GM10248 (cell line): ENCODE measurements at regions of chr19 and their contacts with region 1.

Region 1: DNA sequence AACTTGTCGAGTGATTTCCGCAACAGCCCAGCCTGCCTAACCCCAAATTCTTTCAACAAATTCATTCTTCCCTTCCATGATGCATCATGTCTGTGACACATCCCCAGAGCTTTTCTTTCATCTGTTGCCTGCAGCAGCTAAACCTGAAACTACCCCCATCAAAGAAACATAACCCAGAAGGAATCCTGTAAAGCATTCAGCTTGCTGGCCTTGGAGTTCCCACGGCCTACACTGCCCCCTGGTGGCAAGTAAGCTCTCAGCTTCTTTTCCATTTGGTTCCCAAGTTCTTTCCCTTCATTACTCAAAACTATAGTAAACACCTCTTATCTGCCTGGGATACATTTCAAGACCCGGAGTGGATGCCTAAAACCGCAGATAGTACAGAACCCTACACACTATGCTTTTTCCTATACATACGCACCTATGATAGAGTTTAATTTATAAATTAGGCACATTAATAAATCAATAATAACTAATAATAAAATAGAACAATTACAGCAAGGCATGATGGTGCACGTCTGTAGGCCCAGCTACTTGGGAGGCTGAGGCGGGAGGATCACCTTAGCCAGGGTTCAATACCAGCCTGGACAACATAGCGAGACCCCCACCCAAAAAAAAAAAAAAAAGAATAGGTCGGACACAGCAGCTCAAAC is 7.4 kb downstream of the ETHE1 start:
- DNase-seq: peak; percentile 72
- CTCF ChIP-seq: peak; percentile 80

Region 2: GRCh38 chr19:43305658-43306057 is 213.9 kb before region 1 on chr19:
- CTCF ChIA-PET with region 1: no interaction called
- POLR2A ChIA-PET with region 1: no interaction called
- DNase-seq: no peak
- CTCF ChIP-seq: no peak

Region 3: DNA sequence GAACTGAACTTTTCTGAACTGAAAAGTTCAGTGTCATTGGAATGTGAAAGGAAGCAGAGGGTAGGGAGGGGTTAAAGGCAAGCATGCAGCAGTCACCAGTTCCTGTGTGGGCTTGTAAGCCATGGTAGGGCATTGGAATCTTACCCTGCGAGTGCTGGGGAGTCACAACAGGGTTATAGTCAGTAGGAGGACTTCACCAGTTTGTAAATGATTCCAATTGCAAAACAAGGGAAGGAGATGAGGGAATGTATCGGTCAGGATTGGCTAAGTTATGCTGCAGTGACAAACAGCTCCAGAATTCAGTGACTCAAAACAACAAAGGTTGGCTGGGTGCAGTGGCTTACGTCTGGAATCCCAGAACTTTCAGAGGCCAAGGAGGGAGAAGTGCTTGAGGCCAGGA is 67.0 kb before region 1 on chr19:
- CTCF ChIA-PET with region 1: interaction called, 340 read pairs
- POLR2A ChIA-PET with region 1: no interaction called
- DNase-seq: no peak
- CTCF ChIP-seq: no peak

Region 4: GRCh38 chr19:43463381-43464136 is 56.0 kb before region 1 on chr19:
- CTCF ChIA-PET with region 1: interaction called, 12 read pairs
- POLR2A ChIA-PET with region 1: no interaction called
- DNase-seq: peak; percentile 99
- CTCF ChIP-seq: no peak

Region 5: GRCh38 chr19:43489310-43489709 is 30.3 kb before region 1 on chr19:
- CTCF ChIA-PET with region 1: interaction called, 10 read pairs
- POLR2A ChIA-PET with region 1: no interaction called
- DNase-seq: peak; percentile 68
- CTCF ChIP-seq: no peak

Region 6: GRCh38 chr19:43503501-43504425 is 15.8 kb before region 1 on chr19:
- CTCF ChIA-PET with region 1: interaction called, 22 read pairs
- POLR2A ChIA-PET with region 1: interaction called, 4 read pairs
- DNase-seq: peak; percentile 99
- CTCF ChIP-seq: peak; percentile 46

Region 7: DNA sequence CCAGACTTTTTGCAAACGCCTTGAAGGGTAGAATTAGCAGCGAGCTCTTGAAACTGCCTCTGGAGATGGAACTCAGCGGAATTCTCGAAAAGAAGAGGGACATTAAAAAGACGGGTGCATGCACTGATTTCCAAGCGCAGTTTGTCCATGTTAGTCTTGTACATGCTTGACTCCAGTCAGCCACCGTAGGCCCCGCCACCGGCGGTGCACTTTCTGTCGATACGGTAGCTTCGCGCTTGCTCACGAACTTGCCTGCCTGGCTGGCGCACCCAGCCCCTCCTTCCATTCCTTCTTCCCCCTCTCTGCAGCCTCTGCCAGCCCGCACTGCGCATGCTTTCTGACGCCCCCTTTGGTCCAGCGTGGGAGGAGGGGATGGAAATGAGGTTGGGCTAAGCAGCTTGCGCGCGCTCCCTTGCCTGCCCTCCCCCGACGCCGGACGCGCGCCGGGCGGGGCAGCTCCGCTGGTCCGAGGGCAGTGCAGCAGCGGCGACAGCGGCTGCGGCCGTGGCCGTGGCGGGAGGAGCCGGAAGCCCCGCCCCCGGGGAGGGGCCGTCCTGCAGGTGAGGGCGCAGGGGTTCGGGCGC is 13.5 kb after region 1 on chr19 and contains the start of gene ZNF575:
- CTCF ChIA-PET with region 1: interaction called, 22 read pairs
- POLR2A ChIA-PET with region 1: no interaction called
- DNase-seq: peak; percentile 92
- CTCF ChIP-seq: no peak

Region 8: GRCh38 chr19:43545981-43546380 is 26.4 kb after region 1 on chr19:
- CTCF ChIA-PET with region 1: no interaction called
- POLR2A ChIA-PET with region 1: no interaction called
- DNase-seq: no peak
- CTCF ChIP-seq: no peak

Region 9: DNA sequence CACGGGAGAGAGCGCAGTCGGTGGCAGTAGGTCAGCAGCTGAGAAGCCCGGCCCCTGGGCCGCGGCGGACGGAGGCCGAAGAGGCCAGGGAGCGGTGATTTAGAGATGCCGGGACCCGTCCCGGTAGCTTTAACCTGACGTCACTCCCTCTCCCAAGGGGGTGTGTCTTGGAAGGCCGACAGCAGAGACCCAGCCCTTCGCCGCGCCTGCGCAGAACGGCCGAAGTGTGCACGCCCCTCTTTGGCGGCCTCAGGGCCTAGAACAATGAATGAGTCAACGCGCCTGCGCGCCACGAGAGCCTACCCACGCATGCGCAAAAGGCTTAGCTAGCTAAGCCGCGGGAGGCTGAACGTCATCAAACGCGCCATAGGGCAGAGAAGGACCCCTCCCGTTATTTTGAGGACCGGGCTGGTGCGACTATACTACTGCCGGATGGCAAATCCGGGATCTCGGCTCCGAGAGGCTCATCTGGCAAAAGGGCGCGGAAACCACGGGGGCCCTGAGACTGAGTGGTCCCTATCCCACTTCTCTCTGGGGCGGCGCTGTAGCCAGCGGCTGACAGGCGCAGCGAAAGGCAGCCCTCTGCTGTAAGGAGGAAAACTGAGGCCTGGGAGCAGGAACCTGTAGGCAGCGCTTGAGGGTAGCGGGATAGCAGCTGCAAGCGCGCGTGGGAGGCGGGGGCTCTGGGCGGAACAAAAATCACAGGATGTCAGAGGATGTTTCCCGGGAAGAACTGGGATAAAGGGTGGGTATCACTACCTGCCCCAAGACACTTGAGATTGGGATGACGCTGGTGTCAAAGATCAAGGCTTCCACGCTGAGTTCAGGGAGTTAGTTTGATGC is 76.7 kb after region 1 on chr19 and contains the starts of genes IRGQ and ZNF576:
- CTCF ChIA-PET with region 1: interaction called, 11 read pairs
- POLR2A ChIA-PET with region 1: no interaction called
- DNase-seq: peak; percentile 99
- CTCF ChIP-seq: no peak